ENCODE measurements at regions of chr12 and their contacts with region 1.

Region 1: GRCh38 chr12:111396726-111397445 is 8.8 kb upstream of the SH2B3 start:
- DNase-seq: peak; percentile 86
- H3K4me3 Mint-ChIP-seq: peak overlapping the region; percentile 39
- H3K27ac Mint-ChIP-seq: no peak overlapping the region
- H3K4me1 Mint-ChIP-seq: peaks cover 21% of the 10 kb centered on the region
- H3K27me3 Mint-ChIP-seq: no peaks in the 10 kb centered on the region

Region 2: GRCh38 chr12:111368788-111369495 is 27.9 kb before region 1 on chr12 and contains the start of gene PHETA1:
- CTCF ChIA-PET with region 1: interaction called, 16 read pairs
- POLR2A ChIA-PET with region 1: no interaction called
- DNase-seq: peak; percentile 82
- H3K4me3 Mint-ChIP-seq: peak within 1 kb of the TSS; percentile 77
- H3K27ac Mint-ChIP-seq: no peak within 1 kb of the TSS
- H3K4me1 Mint-ChIP-seq: peaks cover 10% of the 10 kb centered on the region
- H3K27me3 Mint-ChIP-seq: peaks cover 22% of the 10 kb centered on the region
- total RNA-seq, gene PHETA1: 0.69 to 0.97 TPM

Region 3: GRCh38 chr12:111412007-111412829 is 15.3 kb after region 1 on chr12:
- CTCF ChIA-PET with region 1: interaction called, 28 read pairs
- POLR2A ChIA-PET with region 1: no interaction called
- DNase-seq: no peak
- H3K4me3 Mint-ChIP-seq: peak overlapping the region; percentile 1
- H3K27ac Mint-ChIP-seq: peak overlapping the region; percentile 88
- H3K4me1 Mint-ChIP-seq: peaks cover 72% of the 10 kb centered on the region
- H3K27me3 Mint-ChIP-seq: no peaks in the 10 kb centered on the region

Region 4: DNA sequence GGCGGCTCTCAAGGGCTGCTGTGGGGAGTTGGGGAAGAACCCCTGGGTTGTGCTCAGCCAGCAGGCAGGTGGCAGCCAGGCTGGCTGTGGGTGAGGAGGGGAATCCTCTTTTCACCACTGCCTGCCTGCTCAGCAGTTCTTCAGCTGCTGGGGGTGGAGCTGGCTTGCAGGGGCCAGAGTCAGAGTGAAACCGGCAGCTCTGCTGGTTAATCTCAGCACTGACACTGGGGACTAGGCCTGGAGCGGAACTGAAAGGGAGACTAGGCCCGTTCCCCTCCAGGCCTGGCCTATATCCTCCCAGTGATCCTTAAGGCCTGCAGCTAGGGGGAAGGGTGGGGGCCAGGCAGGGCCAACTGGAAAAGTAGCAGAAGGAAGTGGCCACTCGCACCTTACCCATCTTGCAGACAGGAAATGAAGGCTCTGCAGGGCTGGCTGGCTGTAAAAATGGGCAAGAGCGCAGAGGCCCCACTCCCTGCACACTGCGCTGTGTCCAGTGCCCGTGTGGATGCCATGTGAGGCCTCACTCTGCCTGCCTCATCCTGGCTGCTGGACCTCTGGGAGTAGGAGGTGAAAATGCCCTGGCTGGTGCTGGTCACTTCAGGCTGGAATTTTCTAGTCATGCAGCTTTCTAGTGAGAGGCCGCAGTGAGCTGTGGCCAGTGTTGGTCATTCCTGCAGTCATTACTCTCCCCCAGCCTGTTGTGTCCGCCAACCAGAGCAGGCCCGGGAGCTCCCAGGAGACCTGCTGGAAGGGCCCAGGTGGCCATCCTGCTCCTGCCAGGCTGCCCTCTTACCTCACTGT is 48.2 kb after region 1 on chr12:
- CTCF ChIA-PET with region 1: interaction called, 79 read pairs
- POLR2A ChIA-PET with region 1: no interaction called
- DNase-seq: peak; percentile 91
- H3K4me3 Mint-ChIP-seq: peak overlapping the region; percentile 35
- H3K27ac Mint-ChIP-seq: peak overlapping the region; percentile 88
- H3K4me1 Mint-ChIP-seq: peaks cover 73% of the 10 kb centered on the region
- H3K27me3 Mint-ChIP-seq: no peaks in the 10 kb centered on the region

Region 5: DNA sequence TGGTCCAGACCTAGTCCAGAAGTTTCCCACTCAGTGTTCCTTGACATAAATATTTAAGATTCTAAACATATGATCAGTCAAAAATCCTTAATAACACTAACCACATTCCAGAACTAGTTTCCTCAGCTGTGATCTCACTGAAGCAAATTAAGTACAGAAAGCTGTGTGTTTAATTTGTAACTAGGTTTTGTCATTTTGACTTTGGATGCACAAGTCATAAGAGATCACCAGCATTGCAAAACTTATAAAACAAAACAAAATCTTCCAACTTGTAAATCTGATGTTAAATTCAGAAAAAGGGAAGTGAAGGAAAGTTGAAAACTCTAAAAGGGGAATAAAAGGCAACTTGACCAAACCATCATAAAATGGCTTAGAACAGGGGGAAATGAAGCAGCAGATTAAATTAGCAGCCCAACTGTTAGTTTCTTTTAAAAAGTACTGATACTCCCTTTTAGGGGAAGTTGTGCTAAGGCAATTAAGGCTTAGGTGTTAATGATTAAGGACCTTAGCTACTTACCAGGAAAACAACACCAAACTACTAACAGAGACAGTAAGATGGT is 65.4 kb after region 1 on chr12:
- CTCF ChIA-PET with region 1: interaction called, 11 read pairs
- POLR2A ChIA-PET with region 1: no interaction called
- DNase-seq: no peak
- H3K4me3 Mint-ChIP-seq: no peak overlapping the region
- H3K27ac Mint-ChIP-seq: no peak overlapping the region
- H3K4me1 Mint-ChIP-seq: peaks cover 1% of the 10 kb centered on the region
- H3K27me3 Mint-ChIP-seq: no peaks in the 10 kb centered on the region

Region 6: GRCh38 chr12:111546171-111546570 is 149.3 kb after region 1 on chr12:
- CTCF ChIA-PET with region 1: no interaction called
- POLR2A ChIA-PET with region 1: no interaction called
- DNase-seq: no peak
- H3K4me3 Mint-ChIP-seq: peak overlapping the region; percentile 19
- H3K27ac Mint-ChIP-seq: peak overlapping the region; percentile 73
- H3K4me1 Mint-ChIP-seq: peaks cover 22% of the 10 kb centered on the region
- H3K27me3 Mint-ChIP-seq: no peaks in the 10 kb centered on the region